ENCODE measurements at regions of chr11 and their contacts with region 1.

Region 1: GRCh38 chr11:57249384-57250319 is 12.6 kb upstream of the APLNR start:
- DNase-seq: peak; percentile 71 to 88
- H3K4me3 ChIP-seq: no peak overlapping the region
- H3K27ac ChIP-seq: peak overlapping the region in 2 of 5 donors; percentile 21 to 53
- H3K4me1 ChIP-seq: peaks cover 0 to 12% (median 0%) of the 10 kb centered on the region in 4 donors
- H3K27me3 ChIP-seq: peaks cover 0 to 11% (median 0%) of the 10 kb centered on the region in 3 donors
- CTCF ChIP-seq: peak in 5 of 7 experiments; percentile 59 to 81 (median 77)
- EP300 ChIP-seq: no peak
- POLR2A ChIP-seq: no peak

Region 2: DNA sequence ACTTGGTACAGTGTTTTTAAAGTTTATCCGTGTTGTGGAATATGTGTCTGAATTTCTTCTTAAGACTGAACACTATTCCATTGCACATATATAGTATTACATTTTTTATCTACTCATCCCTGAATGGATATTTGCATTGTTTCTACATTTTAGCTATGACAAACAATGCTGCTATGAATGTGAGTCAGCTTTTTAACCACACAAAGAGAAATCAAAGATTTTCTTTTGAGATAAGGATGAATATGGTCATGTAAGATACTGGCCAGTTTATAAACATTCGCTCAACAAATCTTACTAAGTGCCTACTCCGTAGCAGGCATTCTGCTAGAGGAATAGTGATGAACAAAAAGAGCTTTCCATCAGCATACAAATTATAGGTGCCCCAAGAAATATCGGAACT is 484.7 kb before region 1 on chr11:
- intact Hi-C with region 1: no loop called
- DNase-seq: no peak
- H3K4me3 ChIP-seq: no peak overlapping the region
- H3K27ac ChIP-seq: no peak overlapping the region
- H3K4me1 ChIP-seq: no peaks in the 10 kb centered on the region
- H3K27me3 ChIP-seq: no peaks in the 10 kb centered on the region
- CTCF ChIP-seq: no peak
- EP300 ChIP-seq: no peak
- POLR2A ChIP-seq: no peak

Region 3: DNA sequence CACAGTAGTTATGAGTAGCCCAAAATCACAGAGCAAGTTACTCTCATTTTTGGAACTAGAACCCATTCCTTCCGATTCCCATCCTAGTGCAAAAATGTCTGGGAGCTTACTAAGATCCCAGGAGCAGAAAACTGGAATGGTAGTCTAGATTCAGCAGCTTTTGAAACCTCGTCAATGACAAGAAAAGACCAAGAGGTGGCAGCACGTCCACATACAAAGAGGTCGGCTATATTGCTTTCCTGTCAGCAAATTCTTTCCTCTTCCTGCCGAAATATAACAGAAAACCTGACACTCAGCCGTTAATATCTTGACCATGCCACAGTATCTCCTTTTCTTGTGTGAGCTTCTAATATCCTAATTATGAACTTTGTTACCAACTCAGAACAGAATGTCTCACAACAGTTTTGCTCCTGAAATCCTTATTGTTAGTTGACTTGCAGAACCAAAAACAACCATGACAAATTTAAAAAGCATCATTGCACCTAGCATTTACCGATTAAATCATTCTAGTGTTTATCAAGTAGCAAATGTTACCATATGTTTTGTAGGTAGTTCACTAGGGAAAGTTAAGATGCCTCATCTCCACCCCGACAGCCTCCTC is 408.3 kb before region 1 on chr11:
- intact Hi-C with region 1: loop called (anchors 5 kb)
- DNase-seq: peak; percentile 58 to 89
- H3K4me3 ChIP-seq: no peak overlapping the region
- H3K27ac ChIP-seq: no peak overlapping the region
- H3K4me1 ChIP-seq: peaks cover 0 to 8% (median 6%) of the 10 kb centered on the region in 4 donors
- H3K27me3 ChIP-seq: no peaks in the 10 kb centered on the region
- CTCF ChIP-seq: peak in 5 of 7 experiments; percentile 56 to 72 (median 68)
- EP300 ChIP-seq: no peak
- POLR2A ChIP-seq: no peak

Region 4: GRCh38 chr11:57116654-57117053 is 133.0 kb before region 1 on chr11:
- intact Hi-C with region 1: loop called (anchors 5 kb)
- DNase-seq: peak; percentile 29 to 54
- H3K4me3 ChIP-seq: no peak overlapping the region
- H3K27ac ChIP-seq: no peak overlapping the region
- H3K4me1 ChIP-seq: no peaks in the 10 kb centered on the region
- H3K27me3 ChIP-seq: no peaks in the 10 kb centered on the region
- CTCF ChIP-seq: peak in 5 of 7 experiments; percentile 23 to 42 (median 35)
- EP300 ChIP-seq: no peak
- POLR2A ChIP-seq: no peak

Measured in stomach (tissue), 19 donors.